ENCODE measurements at regions of chr1 and their contacts with region 1.

Region 1: DNA sequence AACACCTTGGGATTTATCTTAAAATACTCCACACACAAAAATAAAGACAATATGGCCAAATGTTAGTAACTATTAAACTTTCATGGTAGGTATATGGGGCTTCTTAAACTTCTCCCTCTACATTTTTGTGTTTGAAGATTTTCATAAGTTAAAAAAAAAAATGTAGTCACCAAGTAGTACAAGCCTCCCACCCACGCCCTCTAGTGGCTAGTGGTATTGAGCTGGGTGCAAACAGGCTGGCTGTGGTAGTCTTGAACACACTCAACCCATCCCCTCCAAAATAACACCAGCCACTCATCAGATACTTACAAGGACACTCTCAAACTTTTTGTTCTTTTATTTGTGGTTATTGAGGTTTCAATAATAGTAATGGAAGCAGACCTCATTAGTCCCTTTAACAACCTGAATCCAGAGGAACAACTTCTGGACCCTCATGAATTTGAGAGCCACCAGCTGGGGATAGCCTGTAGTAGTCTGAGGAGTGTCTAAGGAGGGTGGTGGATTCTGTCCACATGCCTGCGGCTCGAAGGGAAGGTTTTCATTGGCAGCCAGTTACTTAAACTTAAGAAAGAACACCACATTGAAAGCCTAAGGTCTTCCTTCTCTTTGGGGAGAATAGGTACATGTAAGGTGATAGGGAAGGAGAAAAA is 15.6 kb downstream of the RD3 start:
- DNase-seq: peak; percentile 84
- H3K4me3 Mint-ChIP-seq: no peak overlapping the region
- H3K27ac Mint-ChIP-seq: no peak overlapping the region
- H3K4me1 Mint-ChIP-seq: no peaks in the 10 kb centered on the region
- H3K27me3 Mint-ChIP-seq: peaks cover 15% of the 10 kb centered on the region

Region 2: GRCh38 chr1:211420389-211420788 is 55.9 kb before region 1 on chr1:
- CTCF ChIA-PET with region 1: interaction called, 3 read pairs
- POLR2A ChIA-PET with region 1: no interaction called
- intact Hi-C with region 1: loop called (anchors 5 kb)
- DNase-seq: peak; percentile 36
- H3K4me3 Mint-ChIP-seq: no peak overlapping the region
- H3K27ac Mint-ChIP-seq: no peak overlapping the region
- H3K4me1 Mint-ChIP-seq: peaks cover 19% of the 10 kb centered on the region
- H3K27me3 Mint-ChIP-seq: no peaks in the 10 kb centered on the region

Region 3: DNA sequence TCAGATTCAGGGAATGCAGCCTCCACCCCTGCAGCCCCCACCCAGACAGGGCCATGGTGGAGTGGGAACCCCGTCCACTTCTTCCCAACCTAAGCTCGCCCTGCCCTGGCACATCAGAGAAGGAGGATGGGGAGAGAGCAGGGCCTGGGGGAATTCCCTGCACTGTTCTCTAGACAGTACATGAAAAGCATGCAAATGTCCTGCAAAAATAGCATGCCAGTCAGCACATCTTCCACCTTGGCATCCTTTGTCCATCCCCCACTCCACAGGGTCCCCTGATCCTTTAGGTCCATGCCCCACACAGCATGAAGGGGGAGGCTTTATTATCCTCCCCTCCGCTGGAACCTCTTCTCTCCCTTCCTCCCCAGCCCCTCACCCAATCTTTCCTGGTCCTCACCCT is 50.7 kb after region 1 on chr1:
- CTCF ChIA-PET with region 1: no interaction called
- POLR2A ChIA-PET with region 1: no interaction called
- intact Hi-C with region 1: no loop called
- DNase-seq: peak; percentile 16
- H3K4me3 Mint-ChIP-seq: no peak overlapping the region
- H3K27ac Mint-ChIP-seq: no peak overlapping the region
- H3K4me1 Mint-ChIP-seq: peaks cover 10% of the 10 kb centered on the region
- H3K27me3 Mint-ChIP-seq: peaks cover 2% of the 10 kb centered on the region

Region 4: DNA sequence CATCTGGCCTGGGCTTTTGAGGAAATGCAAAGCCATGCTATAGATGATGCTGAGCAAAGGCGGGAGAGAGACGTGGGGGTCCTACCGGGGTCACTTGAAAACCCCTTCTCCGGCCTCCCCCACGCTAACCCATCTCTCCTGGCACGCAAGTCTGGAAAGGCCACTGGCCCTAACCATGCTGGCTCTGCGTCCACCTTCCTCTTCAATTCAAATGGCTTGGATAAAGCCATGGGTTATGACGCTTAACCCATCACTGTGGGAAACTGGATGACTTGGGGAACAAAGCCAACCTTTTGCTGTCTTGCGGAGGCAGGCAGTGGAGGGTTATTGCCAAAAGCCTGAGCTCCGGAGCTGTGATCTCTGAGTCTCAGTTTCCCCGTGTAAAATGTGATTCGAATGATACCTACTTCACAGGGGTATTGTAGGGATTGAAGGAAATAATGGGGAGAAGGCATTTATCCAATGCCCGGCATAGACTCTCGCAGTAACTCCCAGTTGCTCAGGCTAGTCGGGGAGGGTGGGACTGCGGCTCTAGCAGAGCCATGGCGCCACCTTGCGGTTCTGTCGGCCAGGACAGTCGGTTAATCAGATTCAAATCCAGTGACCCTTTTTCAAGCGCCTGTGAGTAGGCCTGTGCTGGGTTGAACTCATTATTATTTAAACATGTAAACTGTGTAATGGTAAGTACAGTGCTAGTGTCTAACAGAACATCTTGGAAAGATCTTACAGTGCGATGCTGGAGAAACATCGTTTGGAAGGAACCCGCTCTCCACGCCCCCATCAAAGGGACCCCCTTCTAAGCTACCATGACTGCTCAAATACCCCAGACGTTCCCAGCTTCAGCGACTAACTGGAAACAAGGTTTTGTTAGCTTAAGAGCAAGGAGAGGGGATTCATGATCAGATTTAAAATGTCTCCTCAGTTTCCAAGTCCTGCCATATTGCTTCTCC is 178.8 kb after region 1 on chr1:
- CTCF ChIA-PET with region 1: interaction called, 12 read pairs
- POLR2A ChIA-PET with region 1: no interaction called
- intact Hi-C with region 1: no loop called
- DNase-seq: peak; percentile 87
- H3K4me3 Mint-ChIP-seq: no peak overlapping the region
- H3K27ac Mint-ChIP-seq: no peak overlapping the region
- H3K4me1 Mint-ChIP-seq: no peaks in the 10 kb centered on the region
- H3K27me3 Mint-ChIP-seq: no peaks in the 10 kb centered on the region

Measured in activated CD4-positive, alpha-beta memory T cell treated with anti-CD3 and anti-CD28 coated beads for 36 hours (primary cell).